Stomach (tissue), 19 donors: ENCODE measurements at regions of chr11 and their contacts with region 1.

Region 1: GRCh38 chr11:86818466-86819192 is 18.3 kb downstream of the PRSS23 start:
- DNase-seq: peak in 1 of 2 donors; percentile 85
- H3K4me3 ChIP-seq: no peak overlapping the region
- H3K27ac ChIP-seq: peak overlapping the region in 2 of 5 donors; percentile 70 to 79
- H3K4me1 ChIP-seq: peaks cover 6 to 47% (median 24%) of the 10 kb centered on the region in 4 donors
- H3K27me3 ChIP-seq: no peaks in the 10 kb centered on the region
- CTCF ChIP-seq: peak in 5 of 7 experiments; percentile 18 to 73 (median 68)
- EP300 ChIP-seq: no peak
- POLR2A ChIP-seq: no peak

Region 2: GRCh38 chr11:86459682-86460460 is 358.8 kb before region 1 on chr11:
- intact Hi-C with region 1: loop called (anchors 5 kb)
- DNase-seq: peak; percentile 56 to 67
- H3K4me3 ChIP-seq: no peak overlapping the region
- H3K27ac ChIP-seq: peak overlapping the region in 4 of 5 donors; percentile 41 to 70 (median 58)
- H3K4me1 ChIP-seq: peaks cover 0 to 47% (median 29%) of the 10 kb centered on the region in 4 donors
- H3K27me3 ChIP-seq: no peaks in the 10 kb centered on the region
- CTCF ChIP-seq: no peak
- EP300 ChIP-seq: no peak
- POLR2A ChIP-seq: no peak

Region 3: GRCh38 chr11:86726118-86726748 is 92.4 kb before region 1 on chr11:
- intact Hi-C with region 1: no loop called
- DNase-seq: no peak
- H3K4me3 ChIP-seq: no peak overlapping the region
- H3K27ac ChIP-seq: no peak overlapping the region
- H3K4me1 ChIP-seq: no peaks in the 10 kb centered on the region
- H3K27me3 ChIP-seq: no peaks in the 10 kb centered on the region
- CTCF ChIP-seq: no peak
- EP300 ChIP-seq: no peak
- POLR2A ChIP-seq: no peak

Region 4: GRCh38 chr11:86955361-86956120 is 136.9 kb after region 1 on chr11 and contains the start of gene FZD4:
- intact Hi-C with region 1: no loop called
- DNase-seq: peak; percentile 93 to 98
- H3K4me3 ChIP-seq: peak within 1 kb of the TSS; percentile 84 to 97 (median 90)
- H3K27ac ChIP-seq: peak within 1 kb of the TSS; percentile 91 to 96 (median 93)
- H3K4me1 ChIP-seq: peaks cover 26 to 57% (median 46%) of the 10 kb centered on the region in 4 donors
- H3K27me3 ChIP-seq: peaks cover 0 to 10% (median 4%) of the 10 kb centered on the region in 3 donors
- CTCF ChIP-seq: peak in 2 of 7 experiments; percentile 31 to 36
- EP300 ChIP-seq: no peak
- POLR2A ChIP-seq: peak in 2 of 4 donors; percentile 17 to 50
- total RNA-seq, gene FZD4: 6.1 to 55.8 (median 18.1) TPM

Region 5: GRCh38 chr11:87022254-87022653 is 203.6 kb after region 1 on chr11:
- intact Hi-C with region 1: no loop called
- DNase-seq: no peak
- H3K4me3 ChIP-seq: no peak overlapping the region
- H3K27ac ChIP-seq: no peak overlapping the region
- H3K4me1 ChIP-seq: peaks cover 0 to 15% (median 7%) of the 10 kb centered on the region in 4 donors
- H3K27me3 ChIP-seq: no peaks in the 10 kb centered on the region
- CTCF ChIP-seq: no peak
- EP300 ChIP-seq: no peak
- POLR2A ChIP-seq: no peak

Region 6: DNA sequence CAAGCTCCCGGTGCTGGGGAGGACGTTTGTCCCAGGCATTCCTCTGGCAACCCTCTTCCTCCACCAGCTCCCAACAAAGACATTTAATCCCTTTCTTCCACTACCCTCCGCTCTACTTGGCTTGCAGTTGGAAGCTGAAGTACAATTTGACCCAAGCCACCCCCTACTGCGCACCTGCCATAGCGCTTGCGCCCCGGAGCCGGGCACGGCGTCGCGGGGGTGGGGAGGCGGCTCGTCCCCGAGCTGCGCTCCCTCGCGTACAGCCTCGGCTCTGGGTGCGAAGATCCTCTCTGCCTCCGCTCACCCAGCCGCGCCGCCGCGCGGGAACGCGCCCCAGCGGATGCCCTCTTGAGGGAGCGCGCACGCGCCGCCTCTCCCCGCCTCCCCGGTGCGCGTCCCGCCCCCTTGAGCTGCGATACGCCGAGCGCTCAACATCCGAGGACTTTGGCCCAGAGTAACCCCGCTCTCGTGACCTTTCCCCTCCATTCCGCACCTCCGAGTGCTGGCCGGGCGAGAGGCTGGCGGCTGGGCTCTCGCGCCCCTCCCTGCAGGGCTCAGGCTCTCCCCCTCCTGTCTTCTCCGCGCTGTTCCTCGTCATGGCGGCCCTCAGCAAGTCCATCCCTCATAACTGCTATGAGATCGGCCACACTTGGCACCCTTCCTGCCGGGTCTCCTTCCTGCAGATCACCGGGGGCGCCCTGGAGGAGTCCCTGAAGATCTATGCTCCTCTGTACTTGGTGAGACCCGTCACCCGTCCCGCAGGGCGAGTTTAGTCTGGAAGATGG is 219.0 kb after region 1 on chr11 and contains the start of gene TMEM135:
- intact Hi-C with region 1: no loop called
- DNase-seq: peak; percentile 95 to 97
- H3K4me3 ChIP-seq: peak within 1 kb of the TSS; percentile 68 to 91 (median 70)
- H3K27ac ChIP-seq: peak within 1 kb of the TSS; percentile 81 to 91 (median 89)
- H3K4me1 ChIP-seq: peaks cover 11 to 47% (median 26%) of the 10 kb centered on the region in 4 donors
- H3K27me3 ChIP-seq: no peaks in the 10 kb centered on the region
- CTCF ChIP-seq: no peak
- EP300 ChIP-seq: no peak
- POLR2A ChIP-seq: peak in 1 of 4 donors; percentile 11
- total RNA-seq, gene TMEM135: 0.58 to 202 (median 10.3) TPM